Right ventricle myocardium superior (tissue), 1 donor: ENCODE measurements at regions of chr20 and their contacts with region 1.

Region 1: GRCh38 chr20:54221996-54222890 is 14.4 kb downstream of the PFDN4 start:
- DNase-seq: no peak
- ATAC-seq: peak; percentile 69

Region 2: DNA sequence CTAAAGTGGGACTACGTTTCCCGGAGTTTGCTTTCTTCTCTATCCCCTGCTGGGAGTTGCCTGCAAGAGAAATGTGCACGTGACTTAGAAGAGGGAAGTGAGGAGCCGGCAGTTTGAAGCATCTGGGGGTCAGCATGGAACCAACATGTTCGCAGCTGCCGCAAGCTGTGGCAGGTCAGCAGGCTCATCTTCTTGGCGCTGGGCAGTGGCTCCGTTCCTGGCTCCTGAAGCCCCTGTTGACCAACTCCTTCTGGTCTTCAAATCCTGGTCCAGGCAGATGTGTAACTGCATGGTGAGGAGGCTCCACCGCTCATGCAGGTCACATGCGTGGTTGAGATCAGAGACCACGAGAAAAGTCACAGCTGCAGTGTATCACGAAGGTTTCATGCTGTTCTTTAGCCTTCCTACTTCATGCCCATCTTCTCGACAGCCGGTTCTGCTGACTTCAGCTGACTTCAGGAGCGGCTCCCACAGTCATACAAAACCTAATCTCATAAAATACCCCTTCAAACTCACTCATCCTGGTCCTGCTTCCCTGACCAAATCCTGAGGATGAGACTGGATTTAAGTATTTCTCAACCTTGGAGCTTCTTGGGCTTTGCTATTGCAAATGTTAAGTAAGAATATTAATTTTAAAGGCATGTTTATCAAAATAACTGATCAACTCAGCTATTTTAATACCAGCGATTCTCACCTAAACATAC is 106.9 kb before region 1 on chr20:
- intact Hi-C with region 1: no loop called
- DNase-seq: no peak
- ATAC-seq: no peak

Region 3: GRCh38 chr20:54324652-54325285 is 102.5 kb after region 1 on chr20:
- intact Hi-C with region 1: no loop called
- DNase-seq: no peak
- ATAC-seq: no peak

Region 4: GRCh38 chr20:54649511-54649962 is 427.3 kb after region 1 on chr20:
- intact Hi-C with region 1: loop called (anchors 2 kb)
- DNase-seq: peak; percentile 81
- ATAC-seq: peak; percentile 83